OCI-LY7 (cell line): ENCODE measurements at regions of chr20 and their contacts with region 1.

Region 1: DNA sequence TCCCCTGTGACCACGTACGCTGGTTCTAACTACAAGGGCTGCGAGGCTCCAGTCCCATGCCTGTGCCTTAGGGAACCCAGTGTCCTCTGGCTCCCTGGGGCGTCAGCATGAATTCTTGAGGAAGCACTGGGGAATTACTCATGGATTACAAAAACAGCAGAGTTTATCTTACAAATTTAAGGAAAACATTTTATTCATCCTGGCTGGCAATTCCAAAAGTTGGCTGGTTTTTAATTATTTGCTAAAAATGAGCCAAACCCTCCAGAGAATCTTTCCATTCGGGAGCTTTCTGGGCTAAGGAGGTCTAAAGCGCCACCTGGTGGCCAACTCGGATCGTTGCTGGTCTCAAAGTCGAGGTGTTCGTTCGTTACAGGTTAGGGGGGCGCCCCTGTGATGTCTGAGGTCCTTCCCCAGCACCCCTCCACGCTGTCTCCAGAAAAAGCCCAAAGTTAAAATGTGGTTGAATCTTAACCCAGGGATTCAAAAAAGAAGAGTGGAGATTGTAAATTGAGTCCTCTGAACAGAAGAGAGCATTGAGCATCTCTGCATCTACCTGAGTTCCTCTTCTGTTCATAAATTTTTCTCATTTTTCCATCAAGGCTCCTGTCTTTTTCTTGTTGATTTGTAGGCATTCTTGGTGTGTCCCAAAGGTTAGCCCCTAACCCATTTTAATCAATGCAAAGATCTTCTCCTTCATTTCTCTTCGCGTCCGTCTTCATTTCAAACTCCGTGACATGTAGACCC is 99.4 kb downstream of the BFSP1 start:
- DNase-seq: peak; percentile 60
- H3K4me3 ChIP-seq: no peak overlapping the region
- H3K27ac ChIP-seq: no peak overlapping the region
- H3K4me1 ChIP-seq: no peaks in the 10 kb centered on the region
- CTCF ChIP-seq: peak; percentile 98

Region 2: GRCh38 chr20:17357218-17357617 is 74.6 kb before region 1 on chr20:
- CTCF ChIA-PET with region 1: no interaction called
- POLR2A ChIA-PET with region 1: no interaction called
- intact Hi-C with region 1: no loop called
- DNase-seq: no peak
- H3K4me3 ChIP-seq: no peak overlapping the region
- H3K27ac ChIP-seq: no peak overlapping the region
- H3K4me1 ChIP-seq: no peaks in the 10 kb centered on the region
- CTCF ChIP-seq: no peak

Region 3: GRCh38 chr20:17377231-17377630 is 54.6 kb before region 1 on chr20:
- CTCF ChIA-PET with region 1: no interaction called
- POLR2A ChIA-PET with region 1: no interaction called
- intact Hi-C with region 1: loop called (anchors 10 kb)
- DNase-seq: no peak
- H3K4me3 ChIP-seq: no peak overlapping the region
- H3K27ac ChIP-seq: no peak overlapping the region
- H3K4me1 ChIP-seq: no peaks in the 10 kb centered on the region
- CTCF ChIP-seq: no peak

Region 4: DNA sequence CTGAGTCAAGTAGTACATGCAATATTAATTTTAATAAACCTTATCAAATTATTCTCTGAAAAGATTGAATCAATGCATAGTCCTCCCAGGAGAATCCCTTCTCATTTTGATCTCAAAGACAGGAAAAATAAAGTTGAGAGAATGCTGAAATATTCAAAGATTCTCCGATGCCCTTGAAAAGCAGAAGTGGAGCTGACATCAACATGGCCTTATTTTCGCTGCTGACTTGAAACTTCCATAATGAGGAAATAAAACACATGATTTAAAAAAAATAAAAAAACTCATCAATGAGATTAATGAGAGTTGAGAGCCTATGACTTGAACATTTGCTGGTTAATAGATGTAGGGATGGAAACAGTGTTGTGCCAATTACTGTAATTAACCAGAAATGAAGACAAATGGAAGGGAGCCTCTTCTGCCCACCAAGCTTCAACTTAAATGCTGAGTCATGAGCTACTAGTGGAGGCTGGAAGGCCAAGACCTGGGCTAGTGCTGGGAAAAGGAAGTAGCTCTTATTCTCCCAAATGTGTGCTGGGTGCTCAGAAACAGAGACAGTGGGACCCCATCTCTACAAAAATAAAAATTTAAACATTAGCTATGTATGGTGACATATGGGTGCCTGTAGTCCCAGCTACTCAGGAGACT is 40.5 kb before region 1 on chr20:
- CTCF ChIA-PET with region 1: no interaction called
- POLR2A ChIA-PET with region 1: no interaction called
- intact Hi-C with region 1: no loop called
- DNase-seq: no peak
- H3K4me3 ChIP-seq: no peak overlapping the region
- H3K27ac ChIP-seq: no peak overlapping the region
- H3K4me1 ChIP-seq: no peaks in the 10 kb centered on the region
- CTCF ChIP-seq: no peak

Region 5: GRCh38 chr20:17471606-17472187 is 39.9 kb after region 1 on chr20:
- CTCF ChIA-PET with region 1: no interaction called
- POLR2A ChIA-PET with region 1: no interaction called
- intact Hi-C with region 1: no loop called
- DNase-seq: no peak
- H3K4me3 ChIP-seq: no peak overlapping the region
- H3K27ac ChIP-seq: no peak overlapping the region
- H3K4me1 ChIP-seq: no peaks in the 10 kb centered on the region
- CTCF ChIP-seq: no peak